Common myeloid progenitor, CD34-positive (primary cell): ENCODE measurements at regions of chr6 and their contacts with region 1.

Region 1: GRCh38 chr6:36578431-36578830 is 15.7 kb upstream of the SRSF3 start:
- DNase-seq: no peak
- H3K4me3 ChIP-seq: no peak overlapping the region
- H3K27ac ChIP-seq: no peak overlapping the region
- H3K4me1 ChIP-seq: peaks cover 0 to 8% (median 4%) of the 10 kb centered on the region in 4 experiments
- H3K27me3 ChIP-seq: no peaks in the 10 kb centered on the region

Region 2: GRCh38 chr6:36423101-36423824 is 155.2 kb before region 1 on chr6:
- CTCF ChIA-PET with region 1: interaction called, 15 read pairs
- POLR2A ChIA-PET with region 1: no interaction called
- DNase-seq: peak; percentile 98
- H3K4me3 ChIP-seq: peak overlapping the region; percentile 65 to 89 (median 73)
- H3K27ac ChIP-seq: peak overlapping the region; percentile 61 to 82
- H3K4me1 ChIP-seq: peaks cover 10 to 16% (median 13%) of the 10 kb centered on the region in 4 experiments
- H3K27me3 ChIP-seq: no peaks in the 10 kb centered on the region

Region 3: GRCh38 chr6:36533321-36533720 is 45.1 kb before region 1 on chr6:
- CTCF ChIA-PET with region 1: interaction called, 10 read pairs
- POLR2A ChIA-PET with region 1: no interaction called
- DNase-seq: no peak
- H3K4me3 ChIP-seq: no peak overlapping the region
- H3K27ac ChIP-seq: no peak overlapping the region
- H3K4me1 ChIP-seq: peaks cover 0 to 3% (median 0%) of the 10 kb centered on the region in 4 experiments
- H3K27me3 ChIP-seq: no peaks in the 10 kb centered on the region